ENCODE measurements at regions of chr2 and their contacts with region 1.

Region 1: GRCh38 chr2:12716282-12717190 is at the start of gene TRIB2:
- DNase-seq: peak; percentile 92 to 95 (median 94)
- ATAC-seq: peak; percentile 74 to 90 (median 81)
- H3K4me3 ChIP-seq: peak within 1 kb of the TSS; percentile 68 to 97 (median 87)
- H3K27ac ChIP-seq: peak within 1 kb of the TSS; percentile 90 to 100 (median 96)
- H3K4me1 ChIP-seq: peaks cover 0 to 39% (median 24%) of the 10 kb centered on the region in 12 donors
- H3K27me3 ChIP-seq: no peaks in the 10 kb centered on the region
- CTCF ChIP-seq: peak in 6 of 12 donors; percentile 10 to 39 (median 18)
- POLR2A ChIP-seq: peak; percentile 60 to 88
- total RNA-seq, gene TRIB2: 34.3 to 140 (median 41.4) TPM

Region 2: GRCh38 chr2:11967946-11968465 is 748.5 kb before region 1 on chr2:
- intact Hi-C with region 1: loop called in 1 of 10 experiments (anchors 10 kb)
- DNase-seq: peak; percentile 57 to 81 (median 67)
- ATAC-seq: peak; percentile 77 to 97 (median 85)
- H3K4me3 ChIP-seq: no peak overlapping the region
- H3K27ac ChIP-seq: no peak overlapping the region
- H3K4me1 ChIP-seq: peaks cover 0 to 16% (median 9%) of the 10 kb centered on the region in 12 donors
- H3K27me3 ChIP-seq: no peaks in the 10 kb centered on the region
- CTCF ChIP-seq: no peak
- POLR2A ChIP-seq: no peak

Region 3: DNA sequence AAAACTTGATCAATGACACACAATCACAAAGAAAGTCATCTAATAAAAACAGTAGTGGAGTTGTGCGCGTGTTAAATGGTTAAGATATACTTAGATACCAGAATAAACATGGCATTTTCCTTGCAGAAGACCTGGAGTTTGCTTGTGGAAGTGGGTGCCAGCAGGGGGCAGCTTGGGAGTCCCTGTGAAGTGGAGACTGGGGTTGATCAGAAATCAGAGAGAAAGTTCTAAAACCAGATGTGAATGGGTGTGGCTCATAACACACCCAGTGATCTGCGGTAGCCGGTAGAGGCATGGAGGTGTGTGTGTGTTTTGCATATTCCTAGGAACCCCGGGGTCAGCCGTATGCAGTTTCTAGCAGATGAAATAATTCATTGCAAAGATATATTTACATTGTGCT is 299.9 kb before region 1 on chr2:
- intact Hi-C with region 1: loop called in 9 of 10 experiments (anchors 2 to 10 kb)
- DNase-seq: peak in 4 of 5 donors; percentile 33 to 68 (median 54)
- ATAC-seq: peak in 2 of 4 donors; percentile 20 to 58
- H3K4me3 ChIP-seq: no peak overlapping the region
- H3K27ac ChIP-seq: no peak overlapping the region
- H3K4me1 ChIP-seq: peaks cover 0 to 19% (median 0%) of the 10 kb centered on the region in 12 donors
- H3K27me3 ChIP-seq: no peaks in the 10 kb centered on the region
- CTCF ChIP-seq: peak; percentile 37 to 68 (median 54)
- POLR2A ChIP-seq: no peak

Region 4: DNA sequence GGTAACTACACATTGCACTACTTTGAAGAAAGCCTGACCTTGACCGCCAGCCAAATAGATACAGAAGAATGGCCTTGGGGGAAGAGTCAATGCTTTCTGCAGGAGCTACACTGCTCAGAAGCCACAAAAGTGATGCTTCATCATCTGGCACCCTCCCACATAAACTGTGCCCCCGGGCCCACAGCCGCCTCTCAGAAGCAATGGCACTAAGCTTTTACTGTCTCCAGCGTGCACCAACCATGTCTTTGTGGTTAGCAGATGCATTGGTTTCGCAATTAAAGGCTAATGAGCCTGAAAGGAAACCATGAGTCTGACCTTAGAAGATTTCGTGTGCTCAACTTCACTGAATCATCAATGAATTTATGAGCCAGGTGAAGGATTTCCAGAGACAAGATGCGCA is 209.2 kb before region 1 on chr2:
- intact Hi-C with region 1: loop called in 3 of 10 experiments (anchors 5 to 10 kb)
- DNase-seq: no peak
- ATAC-seq: peak in 1 of 4 donors; percentile 22
- H3K4me3 ChIP-seq: no peak overlapping the region
- H3K27ac ChIP-seq: no peak overlapping the region
- H3K4me1 ChIP-seq: peaks cover 0 to 26% (median 1%) of the 10 kb centered on the region in 12 donors
- H3K27me3 ChIP-seq: no peaks in the 10 kb centered on the region
- CTCF ChIP-seq: no peak
- POLR2A ChIP-seq: no peak

Region 5: GRCh38 chr2:12597610-12598009 is 118.9 kb before region 1 on chr2:
- intact Hi-C with region 1: no loop called
- DNase-seq: no peak
- ATAC-seq: no peak
- H3K4me3 ChIP-seq: no peak overlapping the region
- H3K27ac ChIP-seq: no peak overlapping the region
- H3K4me1 ChIP-seq: peaks cover 0 to 11% (median 0%) of the 10 kb centered on the region in 12 donors
- H3K27me3 ChIP-seq: no peaks in the 10 kb centered on the region
- CTCF ChIP-seq: no peak
- POLR2A ChIP-seq: no peak

Region 6: GRCh38 chr2:12819103-12819475 is 102.6 kb after region 1 on chr2:
- intact Hi-C with region 1: loop called in 7 of 10 experiments (anchors 2 to 10 kb)
- DNase-seq: peak in 4 of 5 donors; percentile 87 to 90 (median 88)
- ATAC-seq: peak; percentile 97 to 98 (median 98)
- H3K4me3 ChIP-seq: peak overlapping the region in 1 of 12 donors; percentile 3
- H3K27ac ChIP-seq: peak overlapping the region; percentile 70 to 95 (median 89)
- H3K4me1 ChIP-seq: peaks cover 7 to 61% (median 45%) of the 10 kb centered on the region in 12 donors
- H3K27me3 ChIP-seq: no peaks in the 10 kb centered on the region
- CTCF ChIP-seq: no peak
- POLR2A ChIP-seq: peak in 1 of 2 donors; percentile 45

Region 7: DNA sequence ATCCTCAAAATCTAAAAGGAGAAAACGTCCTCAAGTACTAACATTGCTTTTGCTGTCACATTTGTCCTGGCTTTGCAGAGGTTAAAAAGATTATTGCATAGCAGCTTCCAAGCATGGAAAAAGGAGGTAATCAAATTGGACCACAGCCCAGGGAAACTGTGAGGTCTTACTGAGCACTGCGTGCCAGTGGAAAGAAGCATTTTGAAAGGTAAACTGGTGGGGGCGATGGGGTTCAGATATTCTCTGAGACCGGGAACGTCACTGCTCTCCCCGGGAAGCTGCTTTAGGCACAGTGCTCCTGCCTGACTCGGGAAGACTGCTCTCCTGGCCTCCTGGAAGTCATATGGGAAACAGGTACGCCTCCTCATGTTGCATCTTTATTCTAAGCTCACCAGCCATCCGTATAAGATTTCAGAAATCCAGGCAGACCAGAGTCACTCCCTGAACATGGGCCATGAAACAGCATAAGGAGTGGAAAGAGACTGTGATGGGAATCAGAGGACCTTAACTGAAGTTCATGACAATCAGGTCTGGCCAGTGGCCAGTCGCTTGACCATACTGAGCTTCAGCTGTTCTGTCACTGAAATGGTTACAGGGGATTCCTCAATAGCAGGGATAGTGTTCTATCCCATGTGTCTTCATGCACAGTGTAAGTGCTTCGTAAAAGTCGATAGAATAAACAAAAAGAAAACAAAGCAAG is 284.3 kb after region 1 on chr2:
- intact Hi-C with region 1: loop called (anchors 2 to 10 kb)
- DNase-seq: peak in 4 of 5 donors; percentile 50 to 73 (median 60)
- ATAC-seq: peak; percentile 71 to 89 (median 84)
- H3K4me3 ChIP-seq: peak overlapping the region in 11 of 12 donors; percentile 4 to 51 (median 32)
- H3K27ac ChIP-seq: peak overlapping the region in 10 of 12 donors; percentile 14 to 84 (median 64)
- H3K4me1 ChIP-seq: peaks cover 0 to 55% (median 27%) of the 10 kb centered on the region in 12 donors
- H3K27me3 ChIP-seq: no peaks in the 10 kb centered on the region
- CTCF ChIP-seq: no peak
- POLR2A ChIP-seq: peak in 1 of 2 donors; percentile 29